HEK293 (cell line): ENCODE measurements at regions of chr2 and their contacts with region 1.

Region 1: DNA sequence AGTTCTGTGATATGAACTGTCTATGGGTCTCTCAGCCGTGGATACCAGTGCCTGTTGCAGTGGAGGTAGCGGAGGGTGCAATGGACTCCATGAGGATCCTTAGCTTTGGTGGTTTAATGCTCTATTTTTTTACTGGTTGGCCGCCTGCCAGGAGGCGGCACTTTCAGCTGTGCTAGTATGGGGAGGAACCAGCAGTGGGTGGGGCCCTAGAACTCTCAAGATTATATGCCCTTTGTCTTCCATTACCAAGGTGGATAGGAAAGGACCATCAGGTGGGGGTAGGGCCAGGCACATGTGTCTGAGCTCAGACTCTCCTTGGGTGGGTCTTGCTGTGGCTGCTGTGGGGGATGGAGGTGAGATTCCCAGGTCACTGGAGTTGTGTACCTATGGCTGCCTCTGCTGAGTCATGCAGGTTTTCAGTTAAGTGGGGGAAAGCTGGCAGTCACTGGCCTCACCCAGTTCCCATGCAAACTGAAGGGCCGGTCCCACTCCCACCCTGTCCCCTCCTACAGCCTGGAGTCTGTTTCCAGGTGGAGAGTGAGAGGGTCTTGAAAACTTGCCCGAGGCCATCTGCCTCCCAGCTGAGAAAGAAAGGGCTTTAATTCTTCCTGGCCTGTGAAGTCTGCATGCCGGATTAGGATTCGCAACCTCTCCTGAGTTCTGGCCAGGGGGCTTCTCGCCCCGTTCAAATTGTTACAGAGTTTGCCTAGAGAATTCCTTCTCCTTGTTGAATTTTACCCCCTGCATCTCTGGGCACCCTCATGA is 14.5 kb downstream of the KCNS3 start:
- H3K4me3 ChIP-seq: no peak overlapping the region
- H3K27ac ChIP-seq: no peak overlapping the region; the same call in 1 of the 2 replicates
- H3K4me1 ChIP-seq: peaks cover 2% of the 10 kb centered on the region; the same call in 1 of the 2 replicates
- CTCF ChIP-seq: no peak

Region 2: DNA sequence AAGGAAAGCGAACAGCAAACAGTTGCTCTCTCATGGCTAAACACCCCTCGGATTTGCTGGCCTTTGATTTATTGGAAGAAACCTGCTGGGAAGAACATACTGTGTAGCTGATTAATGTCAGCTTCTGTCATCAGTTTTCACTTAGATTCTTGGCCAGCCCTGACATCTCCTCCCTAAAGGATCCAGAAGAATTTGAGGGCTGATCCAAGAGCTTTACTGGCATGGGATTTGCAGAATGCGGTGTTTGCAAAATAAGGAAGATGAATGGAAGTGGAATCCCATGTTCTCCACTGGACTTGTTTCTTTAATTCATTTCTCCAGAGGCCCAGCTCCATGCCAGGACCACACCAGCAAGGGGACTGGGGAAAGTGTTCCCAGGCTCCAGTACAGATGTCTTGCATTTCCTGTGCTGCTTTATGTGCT is 587.0 kb after region 1 on chr2:
- CTCF ChIA-PET with region 1: no interaction called
- POLR2A ChIA-PET with region 1: no interaction called
- H3K4me3 ChIP-seq: no peak overlapping the region
- H3K27ac ChIP-seq: 0 out of 2 replicates have a peak overlapping the region, but pooled peaks have one; percentile 6
- H3K4me1 ChIP-seq: no peaks in the 10 kb centered on the region; the same call in 1 of the 2 replicates
- CTCF ChIP-seq: no peak

Region 3: DNA sequence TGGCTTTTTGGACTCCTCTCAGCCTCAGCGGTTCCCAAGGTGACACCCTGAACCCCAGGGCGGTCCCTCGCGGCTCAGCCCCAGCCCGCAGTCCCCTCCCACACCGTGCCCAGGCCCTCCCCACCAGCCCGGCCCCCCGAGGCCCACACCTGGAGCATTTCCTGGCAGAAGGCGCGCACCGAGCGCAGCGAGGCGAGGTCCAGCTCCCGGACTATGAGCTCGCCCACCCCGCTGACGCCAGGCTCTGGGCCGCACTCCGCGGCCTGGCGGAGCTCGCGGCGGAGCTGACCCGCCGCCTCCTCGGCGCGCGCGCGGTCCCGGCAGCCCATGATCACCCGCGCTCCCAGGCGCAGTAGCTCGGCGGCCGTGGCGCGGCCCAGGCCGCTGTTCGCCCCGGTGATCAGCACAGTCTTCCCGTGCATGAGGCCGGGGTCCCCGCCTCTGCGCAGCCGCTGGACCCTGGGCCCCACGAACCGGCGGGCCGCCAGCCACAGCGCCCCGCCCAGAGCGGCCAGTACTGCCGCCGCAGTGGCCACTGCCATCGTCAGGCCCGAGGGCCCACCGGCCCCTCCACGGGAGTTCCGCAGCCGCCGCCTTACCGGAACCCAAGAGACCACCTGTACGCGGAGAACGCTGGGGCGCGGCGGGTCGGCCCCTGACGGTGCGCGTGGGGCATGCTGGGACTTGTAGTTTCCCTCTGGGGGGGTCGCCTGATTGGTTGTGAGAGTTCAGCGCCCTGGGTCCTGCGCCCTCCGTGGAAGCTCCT is 667.3 kb after region 1 on chr2 and contains the start of gene RDH14:
- CTCF ChIA-PET with region 1: no interaction called
- POLR2A ChIA-PET with region 1: interaction called, 15 read pairs
- H3K4me3 ChIP-seq: peak within 1 kb of the TSS; percentile 58
- H3K27ac ChIP-seq: peak within 1 kb of the TSS; percentile 90
- H3K4me1 ChIP-seq: peaks cover 3% of the 10 kb centered on the region; the same call in 1 of the 2 replicates
- CTCF ChIP-seq: peak; percentile 20; the same call in 1 of the 2 replicates